PC-9 (cell line): ENCODE measurements at regions of chr19 and their contacts with region 1.

Region 1: GRCh38 chr19:57632987-57633831 is at the start of gene ZNF211:
- DNase-seq: peak; percentile 90 to 91
- H3K4me3 ChIP-seq: peak within 1 kb of the TSS; percentile 74
- H3K27ac ChIP-seq: no peak within 1 kb of the TSS
- H3K4me1 ChIP-seq: peaks cover 7% of the 10 kb centered on the region
- H3K27me3 ChIP-seq: no peaks in the 10 kb centered on the region
- CTCF ChIP-seq: no peak
- total RNA-seq, gene ZNF211: 7.9 and 11.4 TPM in 2 replicates

Region 2: DNA sequence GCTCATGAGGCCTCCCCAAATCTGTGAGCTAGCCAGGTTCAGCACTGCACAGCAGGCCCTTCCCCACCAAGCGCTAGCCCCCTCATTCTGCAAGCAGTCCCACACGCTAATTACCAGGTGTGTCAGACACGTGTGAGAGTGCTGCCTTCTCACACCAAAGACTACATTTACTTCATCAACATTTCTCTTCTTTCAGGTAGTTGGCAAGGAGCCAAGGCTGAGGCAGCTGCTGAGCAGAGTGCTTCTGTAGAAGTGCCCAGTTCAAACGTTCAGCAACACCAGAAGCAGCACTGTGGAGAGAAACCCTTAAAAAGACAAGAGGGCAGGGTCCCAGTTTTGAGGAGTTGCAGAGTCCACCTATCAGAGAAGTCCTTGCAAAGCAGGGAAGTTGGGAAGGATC is 127.0 kb before region 1 on chr19:
- CTCF ChIA-PET with region 1: no interaction called
- POLR2A ChIA-PET with region 1: no interaction called
- intact Hi-C with region 1: no loop called
- DNase-seq: no peak
- H3K4me3 ChIP-seq: no peak overlapping the region
- H3K27ac ChIP-seq: no peak overlapping the region
- H3K4me1 ChIP-seq: no peaks in the 10 kb centered on the region
- H3K27me3 ChIP-seq: no peaks in the 10 kb centered on the region
- CTCF ChIP-seq: no peak

Region 3: DNA sequence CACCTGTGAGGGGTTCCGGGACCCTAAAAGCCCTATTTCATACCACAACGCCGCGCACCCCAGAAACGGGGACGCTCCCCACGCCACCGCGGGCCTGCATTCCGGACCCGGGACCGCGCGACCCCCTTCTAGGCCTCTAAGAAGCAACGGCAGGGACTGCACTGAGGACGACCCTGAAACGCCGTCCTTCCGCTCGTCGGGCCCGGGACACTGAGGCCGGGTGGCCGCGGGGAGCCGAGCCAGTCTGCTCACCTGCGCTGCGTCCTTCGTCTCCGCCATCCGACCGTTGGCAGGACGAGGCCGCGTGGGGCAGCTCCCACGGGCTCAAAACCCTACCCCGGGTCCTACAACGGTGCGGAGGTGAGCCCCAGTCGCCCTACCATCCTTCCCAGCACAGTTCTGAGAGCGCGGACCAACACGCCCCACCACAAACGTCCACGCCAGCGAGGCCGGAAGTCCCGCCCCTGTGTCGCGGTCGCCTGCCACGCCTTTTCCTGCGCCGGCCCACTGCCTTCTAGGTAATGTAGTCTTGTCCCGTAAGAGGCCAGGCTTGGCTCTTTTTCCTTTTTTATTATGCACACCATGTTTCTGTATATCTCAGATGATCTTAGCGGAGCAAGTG is 73.7 kb before region 1 on chr19 and contains the start of gene ZNF550:
- CTCF ChIA-PET with region 1: no interaction called
- POLR2A ChIA-PET with region 1: no interaction called
- intact Hi-C with region 1: loop called (anchors 5 kb)
- DNase-seq: peak; percentile 83 to 93
- H3K4me3 ChIP-seq: peak within 1 kb of the TSS; percentile 90
- H3K27ac ChIP-seq: peak within 1 kb of the TSS; percentile 83
- H3K4me1 ChIP-seq: peaks cover 13% of the 10 kb centered on the region
- H3K27me3 ChIP-seq: no peaks in the 10 kb centered on the region; the same call in 1 of the 2 replicates
- CTCF ChIP-seq: no peak
- total RNA-seq, gene ZNF550: 18.2 and 19.8 TPM in 2 replicates

Region 4: DNA sequence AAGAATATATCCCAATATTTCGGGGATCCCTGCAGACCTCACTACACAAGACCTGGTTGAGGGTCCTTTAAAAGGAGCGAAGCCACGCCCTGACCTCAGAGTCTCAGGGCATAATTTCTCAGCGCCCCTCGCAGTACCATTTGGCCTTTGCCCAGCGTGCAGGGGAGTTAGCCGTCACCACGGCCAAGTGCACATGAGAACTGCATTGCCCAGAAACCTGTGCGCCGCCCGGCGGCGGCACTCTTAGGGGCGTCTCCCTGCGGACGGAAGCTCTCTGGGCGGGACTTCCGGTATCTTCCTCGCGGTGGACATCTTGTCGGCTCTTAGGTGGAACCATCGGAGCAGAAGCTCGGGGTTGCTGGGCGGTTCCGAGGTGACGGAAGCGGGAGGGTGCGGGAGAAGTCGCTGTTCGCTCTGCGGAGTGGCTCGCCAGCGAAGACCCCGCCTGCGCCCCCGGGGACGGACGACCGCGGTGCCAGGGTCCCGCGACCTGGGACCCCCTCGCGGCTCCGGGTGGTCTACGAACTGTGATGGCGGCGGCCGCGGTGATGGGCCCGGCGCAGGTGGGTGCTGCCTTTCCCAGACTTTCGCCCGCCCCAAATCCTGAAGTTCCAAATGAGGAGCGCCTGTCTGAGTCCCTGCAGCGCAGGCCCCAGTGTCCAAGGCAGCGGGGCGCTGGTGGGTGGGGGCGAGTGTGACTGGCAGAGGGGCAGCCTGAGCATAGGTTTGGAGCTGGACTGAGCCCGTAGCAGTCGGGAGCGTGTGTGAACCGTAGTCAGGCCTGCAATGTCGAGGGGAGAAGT is 19.1 kb before region 1 on chr19 and contains the start of gene ZNF134:
- CTCF ChIA-PET with region 1: no interaction called
- POLR2A ChIA-PET with region 1: no interaction called
- intact Hi-C with region 1: loop called (anchors 1 kb)
- DNase-seq: peak; percentile 89
- H3K4me3 ChIP-seq: peak within 1 kb of the TSS; percentile 85
- H3K27ac ChIP-seq: no peak within 1 kb of the TSS
- H3K4me1 ChIP-seq: no peaks in the 10 kb centered on the region
- H3K27me3 ChIP-seq: no peaks in the 10 kb centered on the region
- CTCF ChIP-seq: peak; percentile 56; the same call in 1 of the 2 replicates
- total RNA-seq, gene ZNF134: 16.5 and 19.1 TPM in 2 replicates

Region 5: GRCh38 chr19:57682226-57682766 is 49.1 kb after region 1 on chr19:
- CTCF ChIA-PET with region 1: no interaction called
- POLR2A ChIA-PET with region 1: no interaction called
- intact Hi-C with region 1: loop called (anchors 1 kb)
- DNase-seq: no peak
- H3K4me3 ChIP-seq: peak overlapping the region; percentile 85
- H3K27ac ChIP-seq: no peak overlapping the region
- H3K4me1 ChIP-seq: 0 out of 2 replicates have a peak, but pooled peaks cover 7% of the 10 kb centered on the region
- H3K27me3 ChIP-seq: no peaks in the 10 kb centered on the region
- CTCF ChIP-seq: no peak